Transverse colon (tissue), 4 donors: ENCODE measurements at regions of chr4 and their contacts with region 1.

Region 1: DNA sequence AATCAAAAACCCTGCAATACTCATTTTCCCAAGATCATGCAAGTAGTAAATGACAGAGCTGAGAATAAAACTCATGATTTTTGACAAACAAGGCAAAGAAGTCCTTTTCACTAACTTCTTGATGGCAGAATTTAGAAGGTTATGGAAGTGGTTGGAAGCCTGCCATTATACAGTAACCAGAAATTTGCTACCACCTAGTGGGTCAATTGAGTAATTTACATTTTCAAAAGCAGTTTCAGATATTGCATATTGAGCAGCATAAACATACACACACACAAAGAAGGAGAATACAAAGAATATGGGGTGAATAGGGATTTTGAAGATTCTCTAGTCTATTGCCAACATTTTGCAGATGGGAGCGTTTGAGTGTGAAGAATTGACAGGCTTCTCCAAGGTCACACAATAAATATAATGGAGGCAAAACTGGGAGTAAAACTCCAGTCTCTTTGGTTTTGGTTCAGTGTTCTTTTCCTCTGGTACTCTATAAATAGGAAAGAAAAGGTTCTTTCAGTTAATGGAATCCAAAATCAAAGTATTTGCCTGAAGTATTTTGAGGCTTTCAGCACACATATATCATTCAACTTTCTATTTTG is 70.2 kb downstream of the GC start:
- DNase-seq: no peak
- H3K4me3 ChIP-seq: no peak overlapping the region
- H3K27ac ChIP-seq: no peak overlapping the region
- H3K4me1 ChIP-seq: peaks cover 0 to 35% (median 17%) of the 10 kb centered on the region in 4 donors
- H3K27me3 ChIP-seq: no peaks in the 10 kb centered on the region
- CTCF ChIP-seq: peak; percentile 56 to 80 (median 60)
- EP300 ChIP-seq: no peak
- POLR2A ChIP-seq: no peak

Region 2: GRCh38 chr4:70601422-70602039 is 1112.2 kb before region 1 on chr4:
- in situ Hi-C with region 1: loop called in 1 of 4 experiments (anchors 25 kb)
- intact Hi-C with region 1: no loop called
- DNase-seq: peak; percentile 60
- H3K4me3 ChIP-seq: no peak overlapping the region
- H3K27ac ChIP-seq: no peak overlapping the region
- H3K4me1 ChIP-seq: no peaks in the 10 kb centered on the region
- H3K27me3 ChIP-seq: no peaks in the 10 kb centered on the region
- CTCF ChIP-seq: peak; percentile 50 to 65 (median 64)
- EP300 ChIP-seq: no peak
- POLR2A ChIP-seq: no peak

Region 3: GRCh38 chr4:70651864-70652506 is 1061.7 kb before region 1 on chr4:
- in situ Hi-C with region 1: loop called in 2 of 4 experiments (anchors 25 kb)
- intact Hi-C with region 1: no loop called
- DNase-seq: no peak
- H3K4me3 ChIP-seq: no peak overlapping the region
- H3K27ac ChIP-seq: no peak overlapping the region
- H3K4me1 ChIP-seq: no peaks in the 10 kb centered on the region
- H3K27me3 ChIP-seq: no peaks in the 10 kb centered on the region
- CTCF ChIP-seq: peak; percentile 44 to 64 (median 49)
- EP300 ChIP-seq: no peak
- POLR2A ChIP-seq: no peak

Region 4: GRCh38 chr4:71184195-71184781 is 529.4 kb before region 1 on chr4:
- in situ Hi-C with region 1: loop called in 1 of 4 experiments (anchors 10 kb)
- intact Hi-C with region 1: no loop called
- DNase-seq: peak; percentile 68
- H3K4me3 ChIP-seq: no peak overlapping the region
- H3K27ac ChIP-seq: no peak overlapping the region
- H3K4me1 ChIP-seq: peaks cover 0 to 15% (median 7%) of the 10 kb centered on the region in 4 donors
- H3K27me3 ChIP-seq: no peaks in the 10 kb centered on the region
- CTCF ChIP-seq: peak; percentile 53 to 68 (median 59)
- EP300 ChIP-seq: no peak
- POLR2A ChIP-seq: no peak

Region 5: GRCh38 chr4:71229477-71230270 is 484.0 kb before region 1 on chr4:
- in situ Hi-C with region 1: loop called in 3 of 4 experiments (anchors 25 kb)
- intact Hi-C with region 1: no loop called
- DNase-seq: peak; percentile 31
- H3K4me3 ChIP-seq: no peak overlapping the region
- H3K27ac ChIP-seq: peak overlapping the region; percentile 31 to 57 (median 43)
- H3K4me1 ChIP-seq: peaks cover 7 to 43% (median 25%) of the 10 kb centered on the region in 4 donors
- H3K27me3 ChIP-seq: no peaks in the 10 kb centered on the region
- CTCF ChIP-seq: peak; percentile 62 to 66 (median 63)
- EP300 ChIP-seq: no peak
- POLR2A ChIP-seq: no peak

Region 6: DNA sequence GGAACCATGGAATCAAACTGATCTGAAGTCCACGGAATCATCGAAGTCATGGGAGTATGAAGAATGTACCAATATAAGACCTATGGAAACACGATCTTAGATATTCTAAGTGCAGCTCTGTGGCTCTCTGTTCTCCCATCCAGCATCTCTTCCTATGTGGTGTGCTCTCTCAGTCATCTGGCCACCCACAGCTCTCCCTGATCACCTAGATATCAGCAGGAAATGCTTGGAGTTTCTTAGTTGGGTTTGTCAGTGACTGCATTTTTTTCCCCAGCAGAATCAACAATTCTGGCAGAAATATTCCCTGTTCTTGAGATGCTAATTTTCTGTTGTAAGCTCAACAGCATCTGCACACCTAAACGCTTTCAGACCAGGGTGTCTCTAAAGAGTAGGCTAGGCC is 23.9 kb before region 1 on chr4:
- in situ Hi-C with region 1: no loop called
- intact Hi-C with region 1: no loop called
- DNase-seq: no peak
- H3K4me3 ChIP-seq: no peak overlapping the region
- H3K27ac ChIP-seq: no peak overlapping the region
- H3K4me1 ChIP-seq: no peaks in the 10 kb centered on the region
- H3K27me3 ChIP-seq: no peaks in the 10 kb centered on the region
- CTCF ChIP-seq: no peak
- EP300 ChIP-seq: no peak
- POLR2A ChIP-seq: no peak

Region 7: GRCh38 chr4:72022553-72022952 is 308.8 kb after region 1 on chr4:
- in situ Hi-C with region 1: no loop called
- intact Hi-C with region 1: no loop called
- DNase-seq: no peak
- H3K4me3 ChIP-seq: no peak overlapping the region
- H3K27ac ChIP-seq: no peak overlapping the region
- H3K4me1 ChIP-seq: no peaks in the 10 kb centered on the region
- H3K27me3 ChIP-seq: no peaks in the 10 kb centered on the region
- CTCF ChIP-seq: no peak
- EP300 ChIP-seq: no peak
- POLR2A ChIP-seq: no peak

Region 8: GRCh38 chr4:72239487-72240116 is 525.9 kb after region 1 on chr4:
- in situ Hi-C with region 1: no loop called
- intact Hi-C with region 1: no loop called
- DNase-seq: no peak
- H3K4me3 ChIP-seq: no peak overlapping the region
- H3K27ac ChIP-seq: no peak overlapping the region
- H3K4me1 ChIP-seq: peaks cover 0 to 5% (median 0%) of the 10 kb centered on the region in 4 donors
- H3K27me3 ChIP-seq: no peaks in the 10 kb centered on the region
- CTCF ChIP-seq: no peak
- EP300 ChIP-seq: no peak
- POLR2A ChIP-seq: no peak